Mammary epithelial cell (primary cell): ENCODE measurements at regions of chr11 and their contacts with region 1.

Region 1: DNA sequence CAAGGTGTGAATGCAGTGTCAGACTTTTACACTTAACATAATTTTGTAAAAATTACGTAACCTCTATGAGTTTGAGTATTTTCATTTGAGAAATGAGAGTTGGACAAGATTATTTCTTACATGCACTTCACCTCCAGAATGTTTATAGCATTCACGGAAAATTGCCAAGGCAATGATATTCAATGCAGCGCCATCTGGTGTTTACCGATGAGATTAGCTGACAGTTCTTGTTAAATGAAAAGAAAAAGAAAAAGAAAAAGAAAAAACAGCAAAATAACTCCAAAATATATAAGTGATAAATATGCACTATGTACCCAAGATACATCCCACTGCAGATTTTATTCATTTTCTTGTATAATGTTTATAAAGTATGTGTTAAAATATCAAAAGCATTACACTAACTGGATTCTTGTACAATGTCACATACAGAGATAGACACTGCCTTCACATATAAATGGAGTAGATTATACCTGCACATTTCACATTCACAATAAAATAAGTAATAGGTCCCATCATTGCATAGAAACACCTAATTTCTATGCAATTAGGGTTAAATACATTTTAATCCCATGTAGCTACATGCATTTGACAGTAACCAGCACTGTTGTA is 976.3 kb upstream of the FAT3 start:
- DNase-seq: peak; percentile 29
- H3K4me3 ChIP-seq: no peak overlapping the region
- H3K27ac ChIP-seq: no peak overlapping the region
- H3K4me1 ChIP-seq: no peaks in the 10 kb centered on the region
- H3K27me3 ChIP-seq: no peaks in the 10 kb centered on the region
- CTCF ChIP-seq: peak; percentile 60 to 71

Region 2: GRCh38 chr11:90639461-90639993 is 608.8 kb before region 1 on chr11:
- CTCF ChIA-PET with region 1: no interaction called
- dilution Hi-C with region 1: no loop called
- in situ Hi-C with region 1: no loop called
- intact Hi-C with region 1: loop called (anchors 1 kb)
- DNase-seq: peak; percentile 6
- H3K4me3 ChIP-seq: no peak overlapping the region
- H3K27ac ChIP-seq: no peak overlapping the region
- H3K4me1 ChIP-seq: no peaks in the 10 kb centered on the region
- H3K27me3 ChIP-seq: no peaks in the 10 kb centered on the region
- CTCF ChIP-seq: peak; percentile 63 to 75

Region 3: DNA sequence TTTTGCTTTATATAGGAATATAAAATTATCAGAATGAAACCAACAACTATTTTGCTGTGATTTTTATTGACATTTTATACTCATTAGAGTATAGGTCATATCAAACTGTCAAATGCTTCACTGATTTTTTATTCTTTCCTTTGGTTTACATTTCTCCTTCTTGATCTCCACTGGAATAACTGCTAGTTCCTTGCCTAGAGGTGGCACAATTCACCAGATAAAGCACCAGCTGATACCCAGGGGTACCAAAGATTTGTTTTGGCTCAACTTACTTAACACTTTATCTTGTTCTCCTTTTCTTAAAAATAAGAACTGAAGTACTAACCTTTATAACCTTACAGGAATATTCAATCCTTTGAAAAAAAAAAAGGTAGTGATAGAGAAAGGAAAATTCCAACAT is 300.4 kb before region 1 on chr11:
- CTCF ChIA-PET with region 1: no interaction called
- dilution Hi-C with region 1: no loop called
- in situ Hi-C with region 1: no loop called
- intact Hi-C with region 1: loop called (anchors 5 kb)
- DNase-seq: no peak
- H3K4me3 ChIP-seq: no peak overlapping the region
- H3K27ac ChIP-seq: no peak overlapping the region
- H3K4me1 ChIP-seq: no peaks in the 10 kb centered on the region
- H3K27me3 ChIP-seq: no peaks in the 10 kb centered on the region
- CTCF ChIP-seq: peak in 1 of 2 donors; percentile 13

Region 4: GRCh38 chr11:91041626-91042025 is 206.7 kb before region 1 on chr11:
- CTCF ChIA-PET with region 1: no interaction called
- dilution Hi-C with region 1: no loop called
- in situ Hi-C with region 1: loop called (anchors 25 kb)
- intact Hi-C with region 1: loop called (anchors 1 kb)
- DNase-seq: no peak
- H3K4me3 ChIP-seq: no peak overlapping the region
- H3K27ac ChIP-seq: no peak overlapping the region
- H3K4me1 ChIP-seq: no peaks in the 10 kb centered on the region
- H3K27me3 ChIP-seq: no peaks in the 10 kb centered on the region
- CTCF ChIP-seq: peak; percentile 21 to 24

Region 5: DNA sequence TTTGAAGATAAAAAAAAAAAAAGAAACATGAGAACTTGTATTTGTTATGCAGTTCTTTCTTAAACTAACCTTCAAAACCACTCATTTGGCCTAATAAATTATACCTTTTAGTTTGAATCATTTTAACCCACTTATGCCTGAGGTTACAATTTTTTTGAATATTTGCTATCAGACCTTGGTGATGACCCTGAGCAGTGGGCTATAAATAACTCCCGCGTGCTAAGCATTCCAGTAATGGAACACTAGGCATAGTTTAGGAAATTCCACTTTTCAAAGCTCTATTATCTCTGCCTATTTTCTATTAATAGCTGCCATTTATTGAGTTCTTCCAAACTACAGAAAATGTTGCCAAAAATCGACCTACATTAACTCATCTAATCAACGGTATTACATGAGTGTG is 17.1 kb before region 1 on chr11:
- CTCF ChIA-PET with region 1: no interaction called
- dilution Hi-C with region 1: no loop called
- in situ Hi-C with region 1: no loop called
- intact Hi-C with region 1: no loop called
- DNase-seq: no peak
- H3K4me3 ChIP-seq: no peak overlapping the region
- H3K27ac ChIP-seq: no peak overlapping the region
- H3K4me1 ChIP-seq: no peaks in the 10 kb centered on the region
- H3K27me3 ChIP-seq: no peaks in the 10 kb centered on the region
- CTCF ChIP-seq: no peak